ENCODE measurements at regions of chr1 and their contacts with region 1.

Region 1: DNA sequence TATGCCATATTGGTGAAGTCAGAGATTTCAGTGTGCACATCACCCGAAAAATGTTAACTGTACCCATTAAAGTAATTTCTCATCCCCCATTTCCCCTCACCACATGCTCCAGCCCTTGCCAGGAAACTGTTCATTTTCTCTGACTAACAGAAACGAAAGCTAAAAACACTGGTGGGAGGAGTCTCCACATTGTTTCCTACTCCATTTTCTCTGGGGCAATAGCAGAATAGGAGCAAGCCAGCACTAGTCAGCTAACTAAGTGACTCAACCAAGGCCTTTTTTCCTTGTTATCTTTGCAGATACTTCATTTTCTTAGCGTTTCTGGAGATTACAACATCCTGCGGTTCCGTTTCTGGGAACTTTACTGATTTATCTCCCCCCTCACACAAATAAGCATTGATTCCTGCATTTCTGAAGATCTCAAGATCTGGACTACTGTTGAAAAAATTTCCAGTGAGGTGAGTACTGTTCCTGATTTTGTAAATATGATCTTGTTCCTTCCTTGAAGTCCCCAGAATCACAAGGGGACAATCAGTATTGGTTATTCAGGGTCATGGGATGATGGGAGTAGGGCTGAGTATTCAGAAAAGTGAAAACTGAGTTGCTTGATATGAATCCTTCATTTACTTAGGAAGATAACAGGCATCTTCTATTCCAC is at the start of gene IFI16:
- DNase-seq: peak; percentile 65
- H3K4me3 Mint-ChIP-seq: peak within 1 kb of the TSS; percentile 91
- H3K27ac Mint-ChIP-seq: peak within 1 kb of the TSS; percentile 95
- H3K4me1 Mint-ChIP-seq: peaks cover 64% of the 10 kb centered on the region
- H3K27me3 Mint-ChIP-seq: no peaks in the 10 kb centered on the region
- total RNA-seq, gene IFI16: 223 and 232 TPM in 2 replicates

Region 2: GRCh38 chr1:158149577-158150269 is 860.1 kb before region 1 on chr1:
- intact Hi-C with region 1: loop called (anchors 10 kb)
- DNase-seq: peak; percentile 57
- H3K4me3 Mint-ChIP-seq: peak overlapping the region; percentile 89
- H3K27ac Mint-ChIP-seq: peak overlapping the region; percentile 83
- H3K4me1 Mint-ChIP-seq: peaks cover 20% of the 10 kb centered on the region
- H3K27me3 Mint-ChIP-seq: no peaks in the 10 kb centered on the region

Region 3: DNA sequence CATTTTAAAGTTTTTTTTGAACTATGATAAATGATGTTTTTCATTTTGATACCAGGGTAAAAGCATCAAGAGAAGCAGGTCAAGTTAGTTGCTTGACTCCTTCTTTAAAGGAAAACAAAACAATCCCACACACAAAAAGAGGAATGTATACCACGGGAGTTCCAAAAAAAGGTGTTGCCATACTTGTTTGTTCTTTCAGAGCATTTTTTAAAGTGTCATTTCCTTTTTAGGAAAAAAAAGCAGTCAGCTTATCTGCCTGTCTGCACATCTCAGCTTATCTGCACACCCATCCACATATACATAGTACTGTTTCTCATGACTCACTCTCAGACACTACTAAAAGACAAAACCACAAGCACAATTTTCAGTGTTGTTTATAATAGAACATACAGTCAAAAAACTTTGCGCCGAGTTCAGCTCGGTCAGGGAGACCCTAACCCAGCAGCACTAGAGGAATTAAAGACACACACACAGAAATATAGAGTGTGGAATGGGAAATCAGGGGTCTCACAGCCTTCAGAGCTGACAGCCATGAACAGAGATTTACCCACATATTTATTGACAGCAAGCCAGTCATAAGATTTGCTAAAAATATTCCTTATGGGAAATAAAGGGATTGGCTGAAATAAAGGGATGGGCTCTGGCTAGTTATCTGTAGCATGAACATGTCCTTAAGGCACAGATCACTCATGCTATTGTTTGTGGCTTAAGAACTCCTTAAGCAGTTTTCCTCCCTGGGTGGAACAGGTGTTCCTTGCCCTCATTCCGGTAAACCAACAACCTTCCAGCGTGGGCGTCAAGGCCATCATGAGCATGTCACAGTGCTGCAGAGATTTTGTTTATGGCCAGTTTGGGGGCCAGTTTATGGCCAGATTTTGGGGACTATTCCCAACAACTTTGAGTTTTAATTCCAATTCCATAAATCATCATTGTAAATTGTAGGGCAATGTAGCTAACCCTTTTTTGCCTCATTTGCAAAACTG is 190.1 kb before region 1 on chr1:
- intact Hi-C with region 1: loop called (anchors 1 kb)
- DNase-seq: no peak
- H3K4me3 Mint-ChIP-seq: peak overlapping the region; percentile 47
- H3K27ac Mint-ChIP-seq: peak overlapping the region; percentile 79
- H3K4me1 Mint-ChIP-seq: peaks cover 31% of the 10 kb centered on the region
- H3K27me3 Mint-ChIP-seq: peaks cover 6% of the 10 kb centered on the region

Region 4: GRCh38 chr1:158931055-158931737 is 78.6 kb before region 1 on chr1 and contains the start of gene PYHIN1:
- intact Hi-C with region 1: loop called (anchors 2 kb)
- DNase-seq: peak; percentile 18
- H3K4me3 Mint-ChIP-seq: peak within 1 kb of the TSS; percentile 91
- H3K27ac Mint-ChIP-seq: peak within 1 kb of the TSS; percentile 91
- H3K4me1 Mint-ChIP-seq: peaks cover 48% of the 10 kb centered on the region
- H3K27me3 Mint-ChIP-seq: peaks cover 5% of the 10 kb centered on the region
- total RNA-seq, gene PYHIN1: 19.5 and 19.9 TPM in 2 replicates

Region 5: DNA sequence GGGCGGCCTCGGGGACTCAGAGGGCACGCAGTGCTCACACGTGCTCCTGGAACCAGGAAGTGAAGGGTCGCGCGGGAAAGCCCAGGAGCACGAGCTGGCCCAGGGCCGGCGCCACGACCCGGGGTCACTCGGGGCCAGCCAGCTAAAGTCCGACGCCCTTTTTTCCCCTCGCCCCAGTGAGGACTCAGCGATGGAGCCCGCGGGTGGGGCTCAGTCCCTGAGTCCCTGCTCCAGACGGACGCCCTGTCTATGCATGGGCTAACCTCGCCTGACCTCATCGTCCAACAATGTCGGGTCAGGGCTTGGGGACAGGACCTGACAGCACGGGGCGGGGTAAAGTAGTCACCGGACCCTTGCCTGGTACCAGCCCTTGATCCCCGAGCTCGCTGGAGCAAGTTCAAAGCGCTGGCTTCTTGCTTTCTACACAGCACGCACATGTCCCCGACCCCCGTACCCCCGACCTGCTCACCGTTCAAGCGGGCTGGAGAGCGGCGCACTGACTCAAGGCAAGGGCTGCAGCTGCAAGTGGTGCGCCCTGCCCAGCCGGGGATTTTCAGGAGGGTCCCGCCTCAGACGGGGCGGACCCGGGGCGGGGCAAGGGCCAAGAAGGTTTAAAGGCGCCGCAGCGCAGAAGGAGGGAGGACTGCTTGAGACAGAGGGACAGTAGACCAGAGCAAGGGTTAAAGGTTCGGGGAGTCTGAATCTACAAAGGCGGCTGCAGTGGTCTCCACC is 915.3 kb after region 1 on chr1 and contains the start of gene TAGLN2:
- intact Hi-C with region 1: loop called (anchors 5 kb)
- DNase-seq: peak; percentile 92
- H3K4me3 Mint-ChIP-seq: peak within 1 kb of the TSS; percentile 94
- H3K27ac Mint-ChIP-seq: peak within 1 kb of the TSS; percentile 99
- H3K4me1 Mint-ChIP-seq: peaks cover 57% of the 10 kb centered on the region
- H3K27me3 Mint-ChIP-seq: peaks cover 1% of the 10 kb centered on the region
- total RNA-seq, gene TAGLN2: 442 and 461 TPM in 2 replicates

Measured in activated T-helper 1 cell treated with anti-CD3 and anti-CD28 coated beads, Interleukin-12 subunit alpha, Interleukin-12 subunit beta, Interleukin-2, Interleukin-4 antibody, amounts not matched to agents 30 ng/mL and 10 ng/mL and 1 ng/mL, durations not matched to agents 14 hours and 24 hours and 36 hours (primary cell).